HEK293 (cell line): ENCODE measurements at regions of chr19 and their contacts with region 1.

Region 1: DNA sequence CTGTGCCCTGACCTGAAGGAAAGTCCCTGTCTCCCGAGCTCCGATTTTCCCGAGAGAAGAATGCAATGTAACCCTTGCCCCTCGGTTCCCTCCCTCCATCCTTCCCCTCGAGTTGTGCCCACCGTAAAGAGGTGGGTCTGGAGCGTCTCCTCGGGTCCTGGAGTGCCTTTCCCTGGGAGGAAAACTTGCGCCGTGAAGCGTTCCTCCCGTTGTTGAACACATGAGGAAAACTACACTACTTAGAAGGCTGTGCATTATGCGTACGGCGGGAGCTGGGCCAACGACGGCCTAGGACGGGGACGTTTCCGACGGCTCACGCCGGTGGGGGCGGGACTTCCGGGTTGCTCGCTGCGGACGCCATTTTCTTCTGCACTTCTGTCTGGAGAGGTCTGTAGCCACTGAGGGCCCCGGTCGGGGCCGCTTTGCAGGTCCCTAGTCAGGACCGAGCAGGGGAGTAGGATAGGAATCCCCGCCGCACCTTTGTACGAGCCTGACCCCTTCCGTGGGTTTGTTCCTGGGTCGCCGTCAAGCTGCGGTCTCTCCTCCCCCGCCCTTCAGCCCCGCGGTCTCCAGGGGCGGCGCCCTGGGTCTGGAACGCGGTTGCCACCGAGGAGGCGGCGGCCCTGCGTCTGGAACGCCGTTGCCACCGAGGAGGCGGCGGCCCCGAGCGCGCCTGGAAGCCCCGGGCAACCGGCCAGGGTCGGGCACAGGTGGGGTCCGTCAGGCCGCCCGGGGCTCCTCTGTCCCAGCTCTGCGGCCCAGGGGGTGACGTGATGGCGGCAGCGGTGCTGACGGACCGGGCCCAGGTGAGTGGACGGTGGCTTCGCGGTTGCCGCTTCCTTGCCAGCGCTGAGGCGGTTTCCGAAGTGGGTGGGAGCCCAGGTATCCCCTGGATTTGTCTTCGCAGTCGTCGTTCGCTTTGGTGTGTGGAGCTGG is at the start of gene ZNF264:
- H3K4me3 ChIP-seq: peak within 1 kb of the TSS; percentile 97
- H3K27ac ChIP-seq: peak within 1 kb of the TSS; percentile 89
- H3K4me1 ChIP-seq: no peaks in the 10 kb centered on the region
- CTCF ChIP-seq: peak; percentile 52; the same call in 1 of the 2 replicates

Region 2: DNA sequence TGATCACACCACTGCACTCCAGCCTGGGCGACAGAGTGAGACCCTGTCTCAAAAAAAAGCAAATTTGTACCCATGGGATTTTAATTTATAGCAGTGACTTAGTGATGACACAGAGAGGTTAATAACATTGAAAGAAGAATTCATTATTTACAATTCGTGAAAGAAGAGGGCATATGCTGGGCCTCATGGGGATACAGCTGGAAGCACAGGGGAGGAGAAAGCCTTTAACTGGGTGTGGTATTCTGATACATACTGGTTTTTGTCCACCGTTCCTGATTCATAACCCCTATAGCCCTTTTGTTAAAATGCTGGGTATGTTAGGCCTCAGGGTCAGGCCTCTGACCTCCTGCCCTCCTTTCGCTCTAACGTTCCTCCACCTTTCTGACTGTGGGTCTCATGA is 10.8 kb after region 1 on chr19:
- CTCF ChIA-PET with region 1: no interaction called
- POLR2A ChIA-PET with region 1: interaction called, 17 read pairs
- H3K4me3 ChIP-seq: no peak overlapping the region
- H3K27ac ChIP-seq: no peak overlapping the region
- H3K4me1 ChIP-seq: no peaks in the 10 kb centered on the region
- CTCF ChIP-seq: no peak

Region 3: GRCh38 chr19:57233207-57233606 is 41.8 kb after region 1 on chr19:
- CTCF ChIA-PET with region 1: no interaction called
- POLR2A ChIA-PET with region 1: no interaction called
- H3K4me3 ChIP-seq: no peak overlapping the region
- H3K27ac ChIP-seq: no peak overlapping the region
- H3K4me1 ChIP-seq: no peaks in the 10 kb centered on the region
- CTCF ChIP-seq: no peak